Cardiac septum (tissue), 1 donor: ENCODE measurements at regions of chr6 and their contacts with region 1.

Region 1: GRCh38 chr6:107674995-107675738 is 148.9 kb downstream of the SCML4 start:
- DNase-seq: peak; percentile 93

Region 2: GRCh38 chr6:107318100-107318736 is 356.9 kb before region 1 on chr6:
- intact Hi-C with region 1: loop called (anchors 10 kb)
- DNase-seq: no peak

Region 3: DNA sequence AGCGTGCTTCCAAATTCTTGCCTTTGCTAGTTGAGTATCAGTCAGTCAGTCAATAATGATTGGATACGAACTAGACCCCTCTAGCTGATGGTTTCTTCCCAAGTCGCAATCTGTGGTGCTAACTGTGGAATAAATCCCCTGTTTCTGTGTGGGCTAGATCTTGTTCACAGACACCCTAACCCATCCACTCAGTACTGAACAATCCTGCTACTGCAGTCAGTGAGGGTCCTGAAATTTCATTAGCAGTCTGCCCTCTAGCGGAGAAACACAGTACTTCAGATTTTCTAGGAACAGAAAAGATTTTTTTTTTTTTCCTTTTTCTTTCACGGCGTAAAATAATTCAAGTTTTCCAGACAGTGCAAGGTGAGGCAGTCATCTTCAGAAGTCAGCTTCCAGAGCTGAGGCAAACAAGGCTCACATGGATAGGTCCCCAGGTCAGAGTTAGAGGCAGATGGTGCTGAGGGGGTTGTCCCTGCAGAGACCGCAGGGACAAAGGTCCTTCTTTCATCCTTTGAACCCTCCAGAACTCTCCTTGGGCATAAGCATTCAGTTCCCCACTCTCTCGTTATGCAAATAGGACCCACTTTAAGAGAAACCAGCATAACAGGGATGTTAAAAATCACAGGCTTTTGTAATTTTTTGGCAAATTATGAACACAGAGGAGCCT is 29.3 kb after region 1 on chr6:
- intact Hi-C with region 1: loop called (anchors 2 kb)
- DNase-seq: no peak

Region 4: DNA sequence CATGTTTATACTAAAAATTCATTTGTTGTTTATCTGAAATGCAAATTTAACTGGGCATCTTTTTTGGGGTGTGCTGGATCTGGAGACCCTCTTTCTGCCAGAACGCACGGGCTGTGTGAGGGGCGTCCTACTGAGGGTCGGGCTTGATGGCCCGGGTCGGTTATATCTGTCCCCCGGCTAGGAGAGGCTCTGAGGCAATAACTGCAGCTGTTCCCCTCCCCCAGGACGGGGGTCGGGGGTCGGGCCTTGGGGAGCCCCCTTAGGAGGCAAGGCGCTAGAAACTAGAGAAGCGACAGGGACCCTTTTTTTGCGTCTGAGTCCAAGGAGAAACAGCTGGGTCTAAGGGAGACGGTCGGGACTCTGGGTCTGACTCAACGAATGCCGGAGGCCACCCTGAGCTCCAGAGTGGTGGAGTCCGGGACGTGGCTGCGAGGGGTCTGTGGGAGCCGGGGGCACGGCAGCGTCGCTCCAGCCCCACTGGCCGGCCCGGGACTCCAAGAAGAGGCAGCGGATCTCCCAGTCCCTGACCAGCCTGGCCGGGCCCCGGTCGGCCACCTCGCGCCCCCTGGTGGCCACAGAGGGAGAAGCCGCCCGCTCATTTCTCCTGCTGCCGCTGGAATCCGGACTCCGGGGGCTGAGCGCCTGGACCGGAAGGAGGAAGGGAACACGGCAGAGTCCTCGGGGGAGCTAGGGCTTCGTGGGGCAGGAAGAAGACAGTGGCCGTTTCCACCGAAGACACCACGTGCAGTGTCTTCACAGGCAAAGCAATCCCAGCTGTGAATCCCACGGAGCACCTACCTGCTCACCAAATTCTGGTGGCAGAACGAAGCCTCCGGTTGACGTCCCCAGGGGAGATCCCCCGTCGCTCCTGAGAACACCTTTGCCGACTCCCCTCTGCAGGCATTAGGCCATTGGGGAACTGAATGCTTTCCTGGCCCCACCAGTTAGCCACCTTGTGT is 173.0 kb after region 1 on chr6:
- intact Hi-C with region 1: loop called (anchors 1 kb)
- DNase-seq: peak; percentile 94